ENCODE measurements at regions of chr15 and their contacts with region 1.

Region 1: DNA sequence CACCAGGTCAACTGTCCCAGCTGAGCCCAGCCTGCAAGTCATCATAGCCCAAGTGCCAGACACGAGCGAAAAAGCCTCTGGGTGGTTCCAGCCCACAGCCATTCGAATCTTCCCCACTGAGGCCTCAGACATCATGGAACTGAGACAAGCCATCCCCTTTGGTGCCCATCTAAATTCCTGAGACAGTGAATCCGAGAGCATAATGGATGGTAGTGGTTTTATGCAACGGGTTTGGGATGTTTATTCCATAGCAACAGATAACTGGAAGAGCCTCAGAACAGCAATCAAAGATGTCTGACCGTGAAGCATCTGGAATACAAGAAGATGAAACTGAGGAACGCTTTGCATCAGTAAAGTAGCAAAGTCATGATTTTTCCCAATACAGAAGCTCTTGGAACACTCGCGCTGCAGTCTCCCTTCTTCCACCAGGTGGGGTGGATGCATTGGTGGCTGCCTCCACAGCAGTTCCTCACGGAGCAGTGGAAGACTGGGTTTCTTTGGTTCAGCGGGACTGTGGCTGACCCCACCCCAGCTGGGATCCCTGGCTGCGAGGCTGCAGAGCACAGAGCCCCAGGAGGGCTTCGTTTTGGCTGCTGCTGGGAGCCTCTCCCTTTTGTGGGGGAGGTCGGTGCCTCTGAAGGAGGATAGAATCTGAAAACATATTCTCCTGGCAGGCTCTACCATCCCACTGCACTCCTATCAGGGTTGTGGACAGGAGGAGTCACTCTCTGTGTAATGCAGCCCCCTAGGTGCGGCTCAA is 26.4 kb upstream of the PDE8A start:
- DNase-seq: peak; percentile 63
- H3K4me3 Mint-ChIP-seq: no peak overlapping the region
- H3K27ac Mint-ChIP-seq: no peak overlapping the region
- H3K4me1 Mint-ChIP-seq: peaks cover 3% of the 10 kb centered on the region
- H3K27me3 Mint-ChIP-seq: peaks cover 1% of the 10 kb centered on the region

Region 2: GRCh38 chr15:84883916-84884768 is 71.1 kb before region 1 on chr15 and contains the start of gene SLC28A1:
- CTCF ChIA-PET with region 1: no interaction called
- POLR2A ChIA-PET with region 1: no interaction called
- intact Hi-C with region 1: no loop called
- DNase-seq: no peak
- H3K4me3 Mint-ChIP-seq: no peak within 1 kb of the TSS
- H3K27ac Mint-ChIP-seq: no peak within 1 kb of the TSS
- H3K4me1 Mint-ChIP-seq: no peaks in the 10 kb centered on the region
- H3K27me3 Mint-ChIP-seq: no peaks in the 10 kb centered on the region
- total RNA-seq, gene SLC28A1: not detected

Region 3: DNA sequence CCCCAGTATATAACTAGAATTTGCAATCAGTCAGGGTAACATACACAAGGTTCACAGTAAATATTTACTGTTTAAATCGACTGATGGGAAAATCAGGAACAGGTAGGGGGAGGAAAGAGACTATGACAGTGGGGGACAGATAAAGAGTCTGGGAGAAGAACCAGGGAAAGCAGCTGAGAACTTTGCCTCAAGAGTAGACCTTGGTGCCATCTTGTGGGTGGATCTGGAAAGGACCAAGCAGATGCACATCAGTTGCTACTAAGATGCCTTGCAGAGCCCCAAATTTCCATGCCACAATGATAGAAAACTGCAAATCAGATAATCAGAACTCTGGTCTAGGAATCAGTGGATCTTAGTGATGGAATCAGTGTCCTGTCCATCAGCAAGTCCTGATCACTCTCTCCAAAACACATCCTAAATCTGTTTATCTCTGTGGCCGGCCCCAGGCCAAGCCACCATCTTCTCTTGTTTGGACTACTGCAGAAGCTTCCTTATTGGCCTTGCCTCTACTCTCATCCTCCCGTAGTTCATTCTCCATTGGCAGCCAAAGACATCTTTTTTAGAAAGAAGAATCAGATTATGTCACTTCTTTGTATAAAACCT is 89.1 kb after region 1 on chr15:
- CTCF ChIA-PET with region 1: interaction called, 22 read pairs
- POLR2A ChIA-PET with region 1: no interaction called
- intact Hi-C with region 1: loop called (anchors 2 kb)
- DNase-seq: peak; percentile 58
- H3K4me3 Mint-ChIP-seq: no peak overlapping the region
- H3K27ac Mint-ChIP-seq: no peak overlapping the region
- H3K4me1 Mint-ChIP-seq: peaks cover 14% of the 10 kb centered on the region
- H3K27me3 Mint-ChIP-seq: no peaks in the 10 kb centered on the region

Region 4: DNA sequence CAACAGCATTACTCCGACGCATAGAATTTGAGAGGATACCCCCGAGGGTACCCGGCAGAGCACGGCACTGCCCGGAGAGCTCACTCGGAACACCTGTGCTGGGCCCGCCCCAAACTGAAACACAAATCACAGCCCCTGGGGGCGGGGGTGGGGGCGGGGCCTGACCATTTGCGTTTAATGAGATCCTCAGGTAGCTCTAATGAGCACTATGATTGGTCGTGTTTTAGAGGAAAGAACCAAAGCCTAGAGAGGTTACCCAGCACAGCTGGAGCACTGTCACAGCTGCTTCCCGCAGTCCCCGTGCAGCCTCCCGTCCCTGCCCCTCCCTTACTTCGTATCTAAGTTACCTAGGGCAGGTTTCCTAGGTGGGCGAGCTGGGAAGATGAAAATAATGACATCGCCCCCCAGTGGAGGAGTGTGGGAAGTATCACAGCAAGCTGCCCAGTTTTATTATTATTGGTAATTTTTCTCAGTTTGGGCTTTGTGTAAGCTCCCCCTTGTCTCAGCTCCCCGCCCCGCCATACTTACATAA is 213.4 kb after region 1 on chr15:
- CTCF ChIA-PET with region 1: interaction called, 15 read pairs
- POLR2A ChIA-PET with region 1: no interaction called
- intact Hi-C with region 1: no loop called
- DNase-seq: peak; percentile 59
- H3K4me3 Mint-ChIP-seq: peak overlapping the region; percentile 28
- H3K27ac Mint-ChIP-seq: no peak overlapping the region
- H3K4me1 Mint-ChIP-seq: peaks cover 5% of the 10 kb centered on the region
- H3K27me3 Mint-ChIP-seq: peaks cover 31% of the 10 kb centered on the region

Region 5: DNA sequence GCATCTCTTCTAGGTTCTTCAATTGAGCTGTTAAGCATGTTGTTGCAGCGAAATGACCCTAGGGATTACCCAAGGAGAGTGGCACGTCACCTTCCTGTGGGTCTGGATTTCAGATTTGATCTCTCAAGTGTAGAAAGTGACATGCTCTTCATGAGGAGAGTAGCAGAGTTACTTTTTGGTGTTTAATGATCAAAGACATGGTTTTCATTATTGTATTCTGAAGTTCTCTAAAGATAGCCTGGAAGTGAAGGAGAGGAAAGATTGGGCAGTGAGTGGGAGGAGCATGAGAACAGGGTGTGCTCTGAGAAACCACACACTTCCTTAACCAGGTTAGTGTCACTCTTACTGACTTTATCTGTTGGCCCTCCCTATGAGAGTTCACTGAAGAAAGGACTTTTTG is 578.8 kb after region 1 on chr15:
- CTCF ChIA-PET with region 1: no interaction called
- POLR2A ChIA-PET with region 1: no interaction called
- intact Hi-C with region 1: no loop called
- DNase-seq: peak; percentile 22
- H3K4me3 Mint-ChIP-seq: no peak overlapping the region
- H3K27ac Mint-ChIP-seq: peak overlapping the region; percentile 60
- H3K4me1 Mint-ChIP-seq: peaks cover 41% of the 10 kb centered on the region
- H3K27me3 Mint-ChIP-seq: no peaks in the 10 kb centered on the region